ENCODE measurements at regions of chr12 and their contacts with region 1.

Region 1: DNA sequence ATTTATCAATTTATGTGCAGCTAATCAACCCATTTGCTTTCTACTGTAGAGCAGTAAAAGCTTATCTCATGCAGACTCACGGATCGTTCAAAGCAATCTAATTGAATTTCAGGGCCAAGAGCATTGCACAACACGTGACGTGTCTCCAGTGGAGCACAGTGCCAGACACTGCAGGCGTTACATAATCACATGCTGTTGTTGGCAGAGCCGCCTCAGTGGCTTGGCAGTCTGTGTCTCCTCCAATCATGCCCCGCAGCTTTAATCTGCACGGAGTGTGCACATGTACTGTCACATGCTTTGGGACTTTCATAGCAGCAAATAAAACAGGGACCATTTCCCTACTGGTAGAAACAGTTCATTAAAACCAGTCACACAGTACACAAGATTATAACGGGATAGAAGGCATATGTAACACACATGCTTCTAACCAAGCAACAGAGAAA is 309.3 kb downstream of the ITPR2 start:
- DNase-seq: peak; percentile 95 to 98
- H3K4me3 ChIP-seq: no peak overlapping the region
- H3K27ac ChIP-seq: peak overlapping the region; percentile 48 to 61
- H3K4me1 ChIP-seq: peaks cover 0 to 11% (median 3%) of the 10 kb centered on the region in 4 donors
- H3K27me3 ChIP-seq: no peaks in the 10 kb centered on the region
- CTCF ChIP-seq: peak; percentile 27 to 46

Region 2: GRCh38 chr12:26113853-26114719 is 409.6 kb before region 1 on chr12:
- intact Hi-C with region 1: loop called (anchors 10 kb)
- DNase-seq: peak; percentile 94 to 98
- H3K4me3 ChIP-seq: peak overlapping the region; percentile 49 to 70
- H3K27ac ChIP-seq: peak overlapping the region; percentile 98 to 99
- H3K4me1 ChIP-seq: peaks cover 0 to 44% (median 10%) of the 10 kb centered on the region in 4 donors
- H3K27me3 ChIP-seq: no peaks in the 10 kb centered on the region
- CTCF ChIP-seq: peak; percentile 34 to 47

Region 3: DNA sequence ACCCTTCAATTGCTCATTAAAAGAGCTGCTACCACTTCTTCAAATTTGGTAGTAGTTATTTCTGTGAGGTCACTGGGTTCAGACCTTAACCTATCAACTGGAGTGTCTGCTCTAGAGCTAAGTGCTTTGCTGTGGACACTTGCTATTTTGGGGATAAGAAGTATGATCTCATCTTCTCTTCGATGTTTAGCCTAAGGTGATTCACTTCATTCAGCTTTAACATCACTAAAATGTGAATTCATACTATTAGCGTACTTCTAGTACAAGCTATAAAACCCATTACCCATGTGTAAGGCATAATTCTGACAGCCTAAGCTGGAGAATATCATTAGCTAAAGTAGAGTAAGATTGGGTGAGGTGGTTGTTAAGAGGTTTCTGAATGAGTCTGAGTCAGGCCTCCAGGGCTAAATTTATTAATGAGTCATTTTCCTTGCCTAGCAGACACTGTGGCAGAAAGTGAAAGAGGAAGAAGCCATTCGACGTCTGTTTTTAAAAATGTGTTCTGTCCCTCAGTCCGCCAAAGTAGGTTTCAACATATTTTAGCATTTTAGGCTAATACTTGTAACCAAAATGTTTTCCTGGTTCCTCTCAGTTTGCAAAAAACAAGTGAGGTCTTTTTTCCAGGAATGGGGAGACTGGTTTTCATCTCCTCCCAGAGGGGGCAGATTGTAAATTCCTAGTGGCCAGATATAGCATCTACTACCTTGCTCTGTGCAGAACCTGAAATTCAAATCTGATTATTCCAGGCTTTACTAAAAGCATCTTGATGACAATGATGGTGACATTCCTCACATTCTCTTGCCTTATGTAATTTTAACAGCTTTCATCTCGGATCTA is 224.7 kb before region 1 on chr12:
- intact Hi-C with region 1: loop called (anchors 10 kb)
- DNase-seq: no peak
- H3K4me3 ChIP-seq: peak overlapping the region; percentile 31 to 45
- H3K27ac ChIP-seq: peak overlapping the region; percentile 66 to 76
- H3K4me1 ChIP-seq: peaks cover 0 to 19% (median 8%) of the 10 kb centered on the region in 4 donors
- H3K27me3 ChIP-seq: no peaks in the 10 kb centered on the region
- CTCF ChIP-seq: peak in 1 of 2 experiments; percentile 49

Region 4: DNA sequence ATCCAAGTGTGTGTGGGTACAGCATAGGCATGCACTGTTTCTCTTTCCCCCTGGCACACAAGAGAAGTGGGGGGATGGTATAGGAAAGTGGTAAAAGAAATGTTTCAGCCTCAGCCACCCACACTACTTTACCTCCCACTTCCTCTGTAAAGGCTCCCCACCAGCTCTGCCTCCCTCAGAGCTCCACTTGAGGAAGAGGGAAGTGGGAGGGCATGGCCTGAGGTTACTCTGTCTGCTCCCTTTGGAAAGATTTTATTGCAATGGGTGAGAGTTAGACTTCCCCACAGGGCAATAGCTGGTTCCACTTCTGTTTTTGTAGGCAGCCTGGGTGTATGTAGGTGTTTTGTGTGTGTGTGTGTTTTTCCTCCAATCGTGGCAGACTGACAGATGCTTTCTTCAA is 183.1 kb before region 1 on chr12:
- intact Hi-C with region 1: no loop called
- DNase-seq: peak in 1 of 2 donors; percentile 53
- H3K4me3 ChIP-seq: no peak overlapping the region
- H3K27ac ChIP-seq: no peak overlapping the region
- H3K4me1 ChIP-seq: no peaks in the 10 kb centered on the region
- H3K27me3 ChIP-seq: no peaks in the 10 kb centered on the region
- CTCF ChIP-seq: no peak

Region 5: DNA sequence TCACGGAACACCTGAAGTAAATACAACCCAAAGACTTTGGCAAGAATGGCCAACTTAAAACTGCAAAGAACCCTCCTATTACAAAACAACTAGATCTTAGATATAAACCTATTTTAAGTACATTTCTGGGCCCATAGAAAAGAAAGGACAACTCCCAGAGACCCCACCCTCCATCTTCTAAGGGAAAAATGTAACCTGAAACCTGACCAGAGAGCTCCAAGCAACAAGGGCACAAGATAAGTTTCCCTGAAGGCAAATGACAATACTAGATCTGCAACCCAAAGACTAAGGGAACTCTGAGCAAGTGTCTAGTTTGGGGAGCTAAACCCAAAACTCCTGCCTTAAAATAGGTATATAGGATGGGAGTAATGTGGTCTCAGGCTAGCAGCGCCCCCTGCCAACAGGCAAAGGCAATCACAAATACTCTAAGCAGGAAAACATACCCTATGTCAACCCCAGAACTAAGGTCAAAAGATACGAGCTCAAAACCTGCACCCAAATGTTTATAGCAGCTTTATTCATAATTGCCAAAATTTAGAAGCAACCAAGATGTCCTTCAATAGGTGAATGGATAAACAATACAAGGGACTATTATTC is 90.4 kb after region 1 on chr12:
- intact Hi-C with region 1: no loop called
- DNase-seq: no peak
- H3K4me3 ChIP-seq: no peak overlapping the region
- H3K27ac ChIP-seq: no peak overlapping the region
- H3K4me1 ChIP-seq: no peaks in the 10 kb centered on the region
- H3K27me3 ChIP-seq: no peaks in the 10 kb centered on the region
- CTCF ChIP-seq: peak; percentile 38 to 40

Measured in tibial artery (tissue), 4 donors.